MCF 10A (cell line): ENCODE measurements at regions of chr18 and their contacts with region 1.

Region 1: GRCh38 chr18:46073474-46074331 is 1.6 kb upstream of the PSTPIP2 start:
- DNase-seq: peak; percentile 83
- H3K4me3 Mint-ChIP-seq: no peak overlapping the region
- H3K27ac Mint-ChIP-seq: no peak overlapping the region
- H3K4me1 Mint-ChIP-seq: peaks cover 33% of the 10 kb centered on the region
- H3K27me3 Mint-ChIP-seq: no peaks in the 10 kb centered on the region
- CTCF ChIP-seq: peak; percentile 47

Region 2: DNA sequence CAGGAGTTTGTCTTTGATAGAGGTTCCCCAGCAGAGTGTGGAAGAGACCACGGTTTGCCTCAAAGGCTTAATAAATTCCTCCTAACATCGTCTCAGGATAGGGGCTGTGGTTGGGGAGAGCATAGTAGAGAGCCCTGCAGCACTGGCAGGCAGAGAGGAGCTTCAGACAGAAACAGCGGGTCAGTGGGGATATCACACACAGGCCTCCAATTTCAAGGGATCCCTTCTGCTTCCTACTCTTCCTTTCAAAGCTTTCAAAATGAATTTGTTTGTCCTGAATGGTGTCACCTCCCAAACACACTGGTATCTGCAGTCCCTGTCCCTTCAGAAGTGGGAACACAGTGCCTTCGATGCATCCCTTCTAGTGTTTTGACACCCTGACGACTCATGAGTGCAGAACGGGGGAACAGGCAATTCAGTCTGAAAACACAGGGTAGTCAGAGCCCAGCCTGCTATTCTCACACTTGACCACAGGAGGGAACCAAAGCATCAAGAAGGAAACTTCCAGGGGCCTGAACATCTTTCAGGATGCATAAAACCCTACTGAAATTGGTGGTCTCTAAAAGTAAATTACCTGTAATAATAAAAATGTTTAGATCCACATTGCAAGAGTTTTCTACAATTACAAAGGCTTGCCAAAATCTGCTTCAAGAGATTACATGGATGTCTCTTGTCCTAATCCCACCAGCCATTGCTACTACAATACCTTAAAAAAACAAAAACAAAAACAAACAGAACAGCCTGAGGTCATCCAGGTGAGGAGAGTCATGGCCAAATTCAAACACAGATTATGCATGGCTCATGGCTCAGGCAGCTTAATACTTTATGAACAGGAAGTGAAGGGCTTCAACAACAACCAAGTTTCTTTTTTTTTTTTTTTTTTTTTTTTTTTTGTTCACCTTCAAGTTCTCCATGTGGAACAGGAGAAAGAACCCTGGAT is 408.6 kb before region 1 on chr18:
- CTCF ChIA-PET with region 1: interaction called, 6 read pairs
- POLR2A ChIA-PET with region 1: interaction called, 3 read pairs
- intact Hi-C with region 1: loop called (anchors 1 kb)
- DNase-seq: peak; percentile 74
- H3K4me3 Mint-ChIP-seq: no peak overlapping the region
- H3K27ac Mint-ChIP-seq: no peak overlapping the region
- H3K4me1 Mint-ChIP-seq: peaks cover 11% of the 10 kb centered on the region
- H3K27me3 Mint-ChIP-seq: no peaks in the 10 kb centered on the region
- CTCF ChIP-seq: peak; percentile 93

Region 3: DNA sequence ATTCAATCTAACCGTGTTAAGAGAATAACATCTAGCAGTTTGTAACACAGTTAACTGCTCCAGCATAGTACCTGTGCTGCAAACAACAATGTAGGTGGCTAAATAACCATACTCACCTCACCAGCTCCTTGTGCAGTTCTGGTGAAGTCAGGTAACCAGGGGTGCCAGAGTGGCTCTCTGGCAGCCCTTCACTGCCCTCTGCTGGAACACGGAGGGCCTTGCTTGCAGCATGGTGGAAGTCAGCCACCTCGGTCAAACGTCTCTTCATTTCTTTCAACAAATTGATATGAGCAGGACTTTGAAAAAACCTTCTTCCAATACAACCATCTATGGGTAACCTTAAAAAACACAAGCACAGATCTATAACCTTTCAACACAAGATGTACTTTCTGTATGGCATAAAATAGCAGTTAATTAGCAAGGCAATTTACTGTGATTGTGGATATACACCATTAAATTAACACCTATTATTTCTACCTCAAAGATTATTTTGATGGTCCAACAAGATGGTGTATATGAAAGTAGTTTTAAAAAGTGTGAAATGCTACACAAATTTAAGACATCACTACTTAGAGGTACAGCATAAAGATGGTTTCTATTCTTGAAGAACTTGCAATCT is 163.2 kb before region 1 on chr18:
- CTCF ChIA-PET with region 1: interaction called, 11 read pairs
- POLR2A ChIA-PET with region 1: no interaction called
- intact Hi-C with region 1: no loop called
- DNase-seq: peak; percentile 61
- H3K4me3 Mint-ChIP-seq: no peak overlapping the region
- H3K27ac Mint-ChIP-seq: no peak overlapping the region
- H3K4me1 Mint-ChIP-seq: no peaks in the 10 kb centered on the region
- H3K27me3 Mint-ChIP-seq: no peaks in the 10 kb centered on the region
- CTCF ChIP-seq: peak; percentile 74

Region 4: DNA sequence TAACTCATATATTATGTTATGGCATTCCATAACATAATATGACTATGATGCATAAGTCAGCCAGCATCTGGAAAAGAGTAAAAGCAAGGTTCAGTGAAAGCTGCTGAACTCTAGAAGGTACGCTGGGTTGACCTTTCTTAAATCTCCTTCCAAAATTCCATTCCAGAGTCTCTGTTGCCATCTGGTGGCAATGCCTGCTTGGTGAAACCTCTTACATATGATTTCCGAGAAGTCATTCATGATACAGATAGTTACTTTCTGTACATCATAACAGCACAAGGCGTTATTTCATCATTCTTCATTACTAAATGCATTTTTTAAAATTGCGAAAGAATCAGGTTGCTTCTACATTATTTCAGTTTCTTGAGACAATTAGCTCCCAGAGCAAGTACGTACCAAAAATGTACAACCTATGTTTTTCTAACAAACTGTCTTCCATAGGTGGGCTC is 99.6 kb before region 1 on chr18:
- CTCF ChIA-PET with region 1: interaction called, 31 read pairs
- POLR2A ChIA-PET with region 1: interaction called, 8 read pairs
- intact Hi-C with region 1: loop called (anchors 1 kb)
- DNase-seq: peak; percentile 89
- H3K4me3 Mint-ChIP-seq: peak overlapping the region; percentile 55
- H3K27ac Mint-ChIP-seq: no peak overlapping the region
- H3K4me1 Mint-ChIP-seq: peaks cover 6% of the 10 kb centered on the region
- H3K27me3 Mint-ChIP-seq: no peaks in the 10 kb centered on the region
- CTCF ChIP-seq: peak; percentile 88

Region 5: DNA sequence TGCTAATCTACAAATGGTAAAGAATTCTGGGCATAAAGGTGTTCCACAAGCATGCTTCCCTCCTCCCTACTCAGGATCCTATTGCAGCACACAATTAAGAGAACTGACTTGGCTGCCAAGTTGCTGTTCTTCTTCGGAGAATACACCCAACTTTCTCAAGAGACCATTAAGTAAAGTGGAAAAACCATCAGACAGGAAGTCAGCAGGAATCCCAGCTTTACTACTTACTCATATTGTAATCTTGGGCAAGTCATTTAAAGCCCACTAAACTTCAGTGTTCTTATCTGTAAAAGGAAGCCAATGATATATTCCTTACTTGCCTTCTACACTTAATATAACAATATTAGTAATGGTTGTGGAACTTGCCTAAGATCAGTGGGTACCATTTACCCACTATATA is 39.5 kb before region 1 on chr18:
- CTCF ChIA-PET with region 1: interaction called, 10 read pairs
- POLR2A ChIA-PET with region 1: interaction called, 10 read pairs
- intact Hi-C with region 1: no loop called
- DNase-seq: no peak
- H3K4me3 Mint-ChIP-seq: no peak overlapping the region
- H3K27ac Mint-ChIP-seq: no peak overlapping the region
- H3K4me1 Mint-ChIP-seq: peaks cover 6% of the 10 kb centered on the region
- H3K27me3 Mint-ChIP-seq: no peaks in the 10 kb centered on the region
- CTCF ChIP-seq: no peak

Region 6: GRCh38 chr18:46060359-46060841 is 13.3 kb before region 1 on chr18:
- CTCF ChIA-PET with region 1: interaction called, 10 read pairs
- POLR2A ChIA-PET with region 1: interaction called, 9 read pairs
- intact Hi-C with region 1: no loop called
- DNase-seq: no peak
- H3K4me3 Mint-ChIP-seq: no peak overlapping the region
- H3K27ac Mint-ChIP-seq: no peak overlapping the region
- H3K4me1 Mint-ChIP-seq: peaks cover 20% of the 10 kb centered on the region
- H3K27me3 Mint-ChIP-seq: no peaks in the 10 kb centered on the region
- CTCF ChIP-seq: no peak